ENCODE measurements at regions of chr10 and their contacts with region 1.

Region 1: DNA sequence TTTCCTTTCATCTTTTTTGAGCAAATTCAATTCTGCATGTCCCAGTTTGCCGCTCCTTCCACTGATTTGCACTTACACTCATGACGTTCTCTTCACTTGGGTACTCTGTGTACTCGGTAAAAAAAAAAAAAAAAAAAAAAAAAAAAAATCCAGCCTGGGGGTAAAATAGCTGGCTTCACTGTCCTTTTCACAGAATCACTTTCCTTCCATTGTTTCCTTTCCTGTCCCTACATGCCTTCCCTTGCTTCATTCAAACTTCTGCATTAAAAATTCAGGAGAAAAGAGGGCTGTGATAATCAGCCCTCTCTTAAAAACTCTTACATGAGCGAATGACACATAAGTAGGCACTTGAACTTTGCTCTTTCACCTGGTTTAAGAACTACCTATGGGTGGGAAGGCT is 8.7 kb downstream of the ANKRD1 start:
- DNase-seq: no peak
- CTCF ChIP-seq: no peak

Region 2: GRCh38 chr10:90652519-90652918 is 259.7 kb before region 1 on chr10:
- CTCF ChIA-PET with region 1: no interaction called
- POLR2A ChIA-PET with region 1: no interaction called
- DNase-seq: no peak
- CTCF ChIP-seq: peak; percentile 31

Region 3: GRCh38 chr10:90817128-90817889 is 94.9 kb before region 1 on chr10:
- CTCF ChIA-PET with region 1: no interaction called
- POLR2A ChIA-PET with region 1: no interaction called
- DNase-seq: no peak
- CTCF ChIP-seq: no peak

Region 4: GRCh38 chr10:90834326-90834725 is 77.8 kb before region 1 on chr10:
- CTCF ChIA-PET with region 1: no interaction called
- POLR2A ChIA-PET with region 1: no interaction called
- DNase-seq: no peak
- CTCF ChIP-seq: no peak

Region 5: GRCh38 chr10:90893190-90893589 is 19.0 kb before region 1 on chr10:
- CTCF ChIA-PET with region 1: interaction called, 48 read pairs
- POLR2A ChIA-PET with region 1: no interaction called
- DNase-seq: no peak
- CTCF ChIP-seq: no peak

Region 6: GRCh38 chr10:90947030-90947940 is 35.1 kb after region 1 on chr10:
- CTCF ChIA-PET with region 1: interaction called, 11 read pairs
- POLR2A ChIA-PET with region 1: no interaction called
- DNase-seq: no peak
- CTCF ChIP-seq: no peak

Region 7: DNA sequence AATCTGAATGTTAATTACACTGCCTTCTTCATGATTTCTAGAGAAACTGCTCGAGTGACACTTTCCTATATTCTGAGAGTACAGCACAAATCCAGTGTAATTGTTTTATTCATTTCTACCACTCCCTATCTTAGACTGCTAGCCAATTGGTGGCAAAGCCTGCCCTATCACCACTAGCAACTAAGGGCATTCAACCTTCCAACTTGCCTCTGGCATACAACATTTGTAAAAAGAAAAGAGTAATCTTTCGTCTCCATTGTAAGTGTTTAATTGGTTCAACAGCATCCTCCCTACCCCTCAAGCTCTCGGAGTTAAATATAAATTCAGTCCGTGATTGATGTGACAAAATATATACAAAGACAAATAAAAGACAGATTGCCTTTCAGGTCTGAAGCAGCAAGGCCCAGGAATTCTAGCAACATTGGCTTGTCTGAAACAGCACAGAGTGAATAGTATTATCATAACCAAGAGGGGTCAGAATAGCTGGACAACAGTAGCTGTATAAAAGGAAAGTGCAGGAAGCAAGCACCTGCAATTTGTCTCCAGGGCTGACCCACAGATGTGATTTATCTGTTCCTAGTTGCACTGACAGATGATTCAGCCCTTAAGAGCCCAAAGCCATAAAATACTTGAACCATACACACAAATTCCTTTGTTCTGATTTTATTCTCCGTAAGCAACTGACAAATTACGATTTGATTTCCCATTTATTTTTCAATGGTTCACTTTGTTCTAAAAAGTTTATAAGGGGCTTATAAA is 56.3 kb after region 1 on chr10:
- CTCF ChIA-PET with region 1: interaction called, 10 read pairs
- POLR2A ChIA-PET with region 1: no interaction called
- DNase-seq: no peak
- CTCF ChIP-seq: no peak

Region 8: DNA sequence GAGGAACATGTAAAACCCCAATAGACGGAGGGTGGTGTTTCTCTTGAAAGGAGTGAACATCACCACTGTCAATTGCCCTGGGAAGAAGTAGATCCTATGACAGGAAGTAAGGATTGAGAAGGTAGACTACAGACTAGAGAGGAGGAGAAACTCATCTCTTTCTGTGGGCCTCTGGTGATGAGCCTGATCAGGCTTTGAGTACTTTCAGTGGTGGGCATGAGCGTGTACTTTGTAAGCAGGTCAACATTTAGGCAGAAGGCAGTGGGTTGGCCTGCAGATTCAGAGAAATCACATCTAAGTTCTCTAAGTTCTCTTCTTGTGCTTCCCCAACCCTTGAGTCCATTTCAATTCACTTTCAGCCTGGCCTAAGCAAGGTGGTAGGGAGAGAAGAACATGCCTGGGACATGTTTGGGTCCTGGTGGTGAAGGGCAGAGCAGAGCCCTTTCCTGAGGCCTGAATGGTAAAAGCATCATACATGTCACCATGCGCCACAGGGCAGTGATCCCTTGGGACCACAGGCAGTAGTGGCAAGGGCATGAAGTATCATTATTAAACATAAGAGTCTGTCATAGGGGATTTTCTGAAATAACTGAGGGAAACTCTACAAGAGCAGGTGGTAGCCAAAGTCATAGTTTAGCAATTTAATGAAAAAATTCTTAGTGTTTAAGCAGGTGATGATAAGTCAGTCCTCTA is 65.1 kb after region 1 on chr10:
- CTCF ChIA-PET with region 1: interaction called, 22 read pairs
- POLR2A ChIA-PET with region 1: no interaction called
- DNase-seq: no peak
- CTCF ChIP-seq: no peak

Region 9: GRCh38 chr10:90999512-91000172 is 87.5 kb after region 1 on chr10:
- CTCF ChIA-PET with region 1: interaction called, 12 read pairs
- POLR2A ChIA-PET with region 1: no interaction called
- DNase-seq: peak; percentile 24
- CTCF ChIP-seq: no peak

Region 10: DNA sequence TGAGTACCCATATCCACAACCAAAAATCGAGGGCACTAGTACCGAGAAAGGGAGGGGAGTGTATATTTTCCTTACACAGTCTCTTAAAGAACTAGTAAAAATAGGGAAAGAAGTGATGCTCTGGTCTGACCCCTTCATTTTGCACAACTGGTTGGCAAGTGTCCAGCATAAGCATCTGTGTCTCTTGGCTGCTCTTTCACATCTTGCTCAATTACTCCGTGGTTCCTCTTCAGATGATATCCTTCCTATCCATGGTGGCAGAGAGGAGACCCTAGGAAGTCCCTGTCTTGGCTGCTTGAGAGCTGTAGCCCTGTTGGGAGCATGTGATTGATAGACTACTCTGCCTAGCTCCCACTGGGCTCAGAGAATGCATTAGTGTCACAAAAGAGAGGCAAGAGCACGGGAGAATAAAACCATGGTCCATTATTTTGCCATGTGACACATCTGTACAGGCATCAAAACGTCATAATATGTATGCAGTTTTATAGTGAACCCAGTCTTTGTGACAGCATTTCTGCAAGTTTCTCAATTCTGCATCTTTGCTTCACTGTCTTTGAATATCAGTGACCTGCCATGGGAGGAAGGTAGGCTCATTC is 120.5 kb after region 1 on chr10:
- CTCF ChIA-PET with region 1: no interaction called
- POLR2A ChIA-PET with region 1: no interaction called
- DNase-seq: no peak
- CTCF ChIP-seq: no peak

Region 11: DNA sequence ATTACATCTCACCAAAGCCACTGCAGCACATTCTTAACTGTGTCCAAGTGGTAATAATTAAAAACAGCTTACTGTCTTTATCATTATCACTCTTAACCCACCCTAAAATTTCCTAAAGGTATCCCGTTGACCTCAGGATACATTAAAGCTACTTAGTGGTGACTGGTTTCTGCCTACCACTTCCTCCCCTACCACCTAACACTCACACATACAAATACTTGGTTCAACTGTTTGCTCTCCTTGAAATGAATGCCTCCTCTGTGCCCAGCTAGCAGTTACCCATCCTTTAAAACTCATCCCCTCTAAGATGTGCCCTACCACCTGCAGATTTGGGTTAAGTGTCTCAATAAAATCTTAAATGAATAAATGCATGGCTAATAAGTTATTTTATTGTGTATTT is 315.4 kb after region 1 on chr10:
- CTCF ChIA-PET with region 1: interaction called, 10 read pairs
- POLR2A ChIA-PET with region 1: no interaction called
- DNase-seq: no peak
- CTCF ChIP-seq: no peak

Measured in GM10248 (cell line).